ENCODE measurements at regions of chr4 and their contacts with region 1.

Region 1: GRCh38 chr4:101419324-101420135 is 72.2 kb upstream of the PPP3CA start:
- DNase-seq: peak; percentile 57
- ATAC-seq: peak; percentile 59
- H3K4me3 ChIP-seq: no peak overlapping the region
- H3K27ac ChIP-seq: peak overlapping the region; percentile 4; the same call in 1 of the 2 replicates
- H3K4me1 ChIP-seq: peaks cover 21% of the 10 kb centered on the region
- H3K27me3 ChIP-seq: no peaks in the 10 kb centered on the region
- CTCF ChIP-seq: no peak
- EP300 ChIP-seq: peak in 1 of 2 experiments; percentile 42; a peak in 1 of 4 replicates
- POLR2A ChIP-seq: no peak
- RAD21 ChIP-seq: no peak

Region 2: GRCh38 chr4:101347557-101348366 is 71.8 kb before region 1 on chr4:
- CTCF ChIA-PET with region 1: no interaction called
- POLR2A ChIA-PET with region 1: interaction called, 3 read pairs
- RAD21 ChIA-PET with region 1: interaction called, 20 read pairs
- SMC1A ChIA-PET with region 1: interaction called, 5 read pairs
- in situ Hi-C with region 1: no loop called
- intact Hi-C with region 1: loop called (anchors 5 kb)
- DNase-seq: peak; percentile 83
- ATAC-seq: peak; percentile 91
- H3K4me3 ChIP-seq: peak overlapping the region; percentile 90
- H3K27ac ChIP-seq: peak overlapping the region; percentile 47
- H3K4me1 ChIP-seq: peaks cover 10% of the 10 kb centered on the region
- H3K27me3 ChIP-seq: peaks cover 1 to 4% of the 10 kb centered on the region in 2 experiments; a peak in 1 of 4 replicates
- CTCF ChIP-seq: no peak
- EP300 ChIP-seq: no peak
- POLR2A ChIP-seq: peak; percentile 80
- RAD21 ChIP-seq: no peak

Region 3: DNA sequence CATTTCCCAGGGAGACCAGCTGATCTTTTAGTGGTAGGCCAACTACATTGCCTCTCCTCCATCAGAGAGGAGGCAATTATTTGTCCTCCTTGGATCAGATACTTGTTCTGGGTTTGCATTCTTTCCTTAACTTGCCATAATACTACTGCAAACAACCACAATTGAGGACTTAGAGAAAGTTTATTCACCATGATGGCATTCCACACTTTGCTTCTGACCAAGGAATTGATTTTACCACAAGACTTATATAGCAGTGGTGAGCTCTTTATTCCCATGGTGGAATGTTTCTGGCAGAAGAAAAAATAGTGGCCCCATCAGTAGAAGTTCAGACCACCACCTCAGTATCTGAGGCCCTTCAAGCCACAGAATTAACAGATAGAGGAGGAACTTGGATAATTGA is 51.7 kb after region 1 on chr4:
- CTCF ChIA-PET with region 1: no interaction called
- POLR2A ChIA-PET with region 1: no interaction called
- RAD21 ChIA-PET with region 1: no interaction called
- SMC1A ChIA-PET with region 1: no interaction called
- in situ Hi-C with region 1: no loop called
- intact Hi-C with region 1: no loop called
- DNase-seq: no peak
- ATAC-seq: no peak
- H3K4me3 ChIP-seq: no peak overlapping the region
- H3K27ac ChIP-seq: no peak overlapping the region
- H3K4me1 ChIP-seq: no peaks in the 10 kb centered on the region
- H3K27me3 ChIP-seq: no peaks in the 10 kb centered on the region
- CTCF ChIP-seq: no peak
- EP300 ChIP-seq: no peak
- POLR2A ChIP-seq: no peak
- RAD21 ChIP-seq: no peak

Region 4: DNA sequence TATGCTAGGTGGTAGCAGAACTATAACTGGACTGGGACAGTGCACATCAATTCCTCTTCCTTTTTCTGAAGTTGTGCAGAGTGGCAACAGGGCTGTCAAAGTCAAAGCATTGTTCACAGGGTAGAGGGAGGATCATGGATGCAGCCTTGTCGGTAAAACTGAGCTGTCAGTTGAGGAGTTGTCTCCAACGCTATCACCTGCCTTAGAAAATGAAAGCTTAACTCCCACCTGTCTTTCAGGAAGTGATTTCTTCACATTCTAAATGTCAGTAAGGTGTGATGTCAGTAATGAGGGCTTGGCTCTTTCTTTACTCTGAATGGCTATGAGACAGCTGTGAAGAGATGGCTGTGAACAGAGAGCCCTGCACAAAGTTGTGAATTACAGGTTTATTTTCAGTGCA is 304.6 kb after region 1 on chr4:
- CTCF ChIA-PET with region 1: no interaction called
- POLR2A ChIA-PET with region 1: no interaction called
- RAD21 ChIA-PET with region 1: no interaction called
- SMC1A ChIA-PET with region 1: no interaction called
- in situ Hi-C with region 1: no loop called
- intact Hi-C with region 1: no loop called
- DNase-seq: no peak
- ATAC-seq: peak; percentile 20; the same call in 1 of the 3 replicates
- H3K4me3 ChIP-seq: no peak overlapping the region
- H3K27ac ChIP-seq: no peak overlapping the region
- H3K4me1 ChIP-seq: no peaks in the 10 kb centered on the region
- H3K27me3 ChIP-seq: no peaks in the 10 kb centered on the region
- CTCF ChIP-seq: no peak
- EP300 ChIP-seq: no peak
- POLR2A ChIP-seq: no peak
- RAD21 ChIP-seq: no peak

Region 5: DNA sequence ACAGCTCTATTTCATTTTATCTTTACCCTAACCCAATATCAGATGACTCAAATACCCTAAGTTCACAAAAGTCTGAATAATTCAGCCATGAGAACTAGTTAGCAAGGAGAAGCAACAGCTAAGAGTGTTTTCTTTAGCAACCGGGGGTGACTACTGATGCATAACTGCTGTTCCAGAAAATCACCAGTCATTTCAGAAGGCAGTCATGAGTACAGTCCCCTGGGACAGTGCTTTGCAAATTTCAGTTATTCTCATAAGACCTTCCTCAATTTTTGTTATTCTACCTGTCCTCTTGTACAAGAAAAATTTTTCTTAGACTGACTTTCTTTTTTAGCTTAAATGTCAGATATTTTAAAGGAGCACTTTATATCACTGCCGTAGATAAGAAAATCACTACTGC is 387.4 kb after region 1 on chr4:
- CTCF ChIA-PET with region 1: no interaction called
- POLR2A ChIA-PET with region 1: no interaction called
- RAD21 ChIA-PET with region 1: no interaction called
- SMC1A ChIA-PET with region 1: no interaction called
- in situ Hi-C with region 1: no loop called
- intact Hi-C with region 1: loop called (anchors 10 kb)
- DNase-seq: peak; percentile 77
- ATAC-seq: peak; percentile 99
- H3K4me3 ChIP-seq: no peak overlapping the region
- H3K27ac ChIP-seq: no peak overlapping the region
- H3K4me1 ChIP-seq: peaks cover 6% of the 10 kb centered on the region
- H3K27me3 ChIP-seq: no peaks in the 10 kb centered on the region; a peak in 1 of 4 replicates
- CTCF ChIP-seq: no peak
- EP300 ChIP-seq: peak; percentile 89 to 90; a peak in 3 of 4 replicates
- POLR2A ChIP-seq: no peak
- RAD21 ChIP-seq: peak; percentile 36